ENCODE measurements at regions of chr3 and their contacts with region 1.

Region 1: DNA sequence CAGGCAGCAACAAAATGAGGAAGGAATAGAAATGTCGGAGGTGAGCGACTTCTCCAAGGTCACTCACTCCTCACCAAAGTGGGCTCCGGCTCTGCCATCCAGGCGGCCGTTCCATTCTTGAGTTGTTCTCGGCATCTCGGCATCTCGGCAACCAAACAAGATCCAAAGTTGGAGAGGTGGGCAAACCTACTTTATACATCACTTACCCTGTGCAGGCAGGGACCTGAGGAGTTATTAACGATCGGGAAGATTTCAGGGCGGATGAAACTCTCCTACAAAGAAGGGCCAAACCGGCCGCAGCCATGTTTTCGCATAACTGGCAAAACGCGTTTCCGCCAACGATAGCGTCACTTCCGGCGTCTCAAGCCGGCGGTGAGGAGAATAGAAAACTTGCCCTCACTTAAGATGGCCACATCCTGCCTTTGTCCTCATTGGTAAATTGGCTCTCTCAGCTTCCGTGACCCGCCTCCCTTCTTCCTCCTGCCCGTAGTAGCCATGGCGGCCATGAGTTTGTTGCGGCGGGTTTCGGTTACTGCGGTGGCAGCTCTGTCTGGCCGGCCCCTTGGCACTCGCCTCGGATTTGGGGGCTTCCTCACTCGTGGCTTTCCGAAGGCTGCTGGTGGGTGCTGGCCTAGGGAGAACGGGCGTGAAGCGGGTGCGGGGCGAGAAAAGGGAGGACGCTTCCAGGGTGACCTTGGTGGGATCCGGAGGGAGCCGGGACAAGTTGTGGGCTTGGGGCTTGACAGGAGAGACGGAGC is at the starts of genes MRPL47 and NDUFB5:
- DNase-seq: peak; percentile 79 to 98 (median 92)
- ATAC-seq: peak; percentile 99 to 100 (median 100)
- H3K4me3 ChIP-seq: peak within 1 kb of the TSS; percentile 83 to 99
- H3K4me3 Mint-ChIP-seq: peak within 1 kb of the TSS; percentile 96 to 100 (median 99)
- H3K27ac ChIP-seq: peak within 1 kb of the TSS; percentile 91
- H3K27ac Mint-ChIP-seq: peak within 1 kb of the TSS; percentile 99 to 100
- H3K4me1 ChIP-seq: peaks cover 12 to 22% of the 10 kb centered on the region in 2 experiments
- H3K4me1 Mint-ChIP-seq: peaks cover 42 to 54% (median 46%) of the 10 kb centered on the region in 3 donors
- H3K27me3 ChIP-seq: no peaks in the 10 kb centered on the region
- H3K27me3 Mint-ChIP-seq: no peaks in the 10 kb centered on the region
- total RNA-seq, gene MRPL47: 16.2 to 22.7 (median 19.7) TPM
- total RNA-seq, gene NDUFB5: 25.6 to 56.1 (median 49.7) TPM

Region 2: GRCh38 chr3:179624451-179624850 is 20.0 kb after region 1 on chr3:
- CTCF ChIA-PET with region 1: interaction called in 1 of 2 experiments, 12 read pairs
- POLR2A ChIA-PET with region 1: no interaction called
- DNase-seq: no peak
- ATAC-seq: no peak
- H3K4me3 ChIP-seq: no peak overlapping the region
- H3K4me3 Mint-ChIP-seq: no peak overlapping the region
- H3K27ac ChIP-seq: no peak overlapping the region
- H3K27ac Mint-ChIP-seq: no peak overlapping the region
- H3K4me1 ChIP-seq: no peaks in the 10 kb centered on the region
- H3K4me1 Mint-ChIP-seq: no peaks in the 10 kb centered on the region
- H3K27me3 ChIP-seq: no peaks in the 10 kb centered on the region
- H3K27me3 Mint-ChIP-seq: no peaks in the 10 kb centered on the region

Region 3: GRCh38 chr3:179653096-179653797 is 48.7 kb after region 1 on chr3:
- CTCF ChIA-PET with region 1: interaction called in 1 of 2 experiments, 15 read pairs
- POLR2A ChIA-PET with region 1: interaction called, 3 to 4 read pairs
- DNase-seq: peak; percentile 19 to 73 (median 53)
- ATAC-seq: peak; percentile 72 to 80 (median 75)
- H3K4me3 ChIP-seq: peak overlapping the region; percentile 70 to 90
- H3K4me3 Mint-ChIP-seq: peak overlapping the region; percentile 91 to 94 (median 93)
- H3K27ac ChIP-seq: peak overlapping the region; percentile 27
- H3K27ac Mint-ChIP-seq: peak overlapping the region; percentile 86 to 95
- H3K4me1 ChIP-seq: peaks cover 5 to 15% of the 10 kb centered on the region in 2 experiments
- H3K4me1 Mint-ChIP-seq: peaks cover 30 to 40% (median 31%) of the 10 kb centered on the region in 3 donors
- H3K27me3 ChIP-seq: no peaks in the 10 kb centered on the region
- H3K27me3 Mint-ChIP-seq: no peaks in the 10 kb centered on the region

Measured in T-cell (primary cell).